Heart right ventricle (tissue), 16 donors: ENCODE measurements at regions of chr5 and their contacts with region 1.

Region 1: DNA sequence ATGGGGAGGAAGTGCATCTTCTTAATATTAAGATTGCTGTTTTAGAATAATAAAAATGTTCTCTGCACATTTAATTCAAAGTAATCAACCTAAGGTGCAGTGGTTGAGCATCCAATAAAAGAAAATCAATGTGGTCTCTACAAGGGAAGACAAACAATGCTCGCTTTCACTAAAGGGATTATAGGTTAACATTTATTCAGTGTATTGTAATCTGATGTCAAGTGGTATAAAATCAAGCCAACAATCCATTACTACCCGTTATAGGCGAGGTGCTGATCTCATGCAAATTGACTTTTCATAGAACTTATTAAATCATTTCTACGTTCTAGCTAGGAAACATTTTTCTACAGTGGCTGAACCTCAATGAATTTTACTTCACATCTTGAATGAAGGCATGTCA is 773.9 kb downstream of the NR2F1-AS1 start:
- DNase-seq: no peak
- ATAC-seq: no peak
- H3K4me3 ChIP-seq: no peak overlapping the region
- H3K27ac ChIP-seq: no peak overlapping the region
- H3K4me1 ChIP-seq: no peaks in the 10 kb centered on the region
- H3K27me3 ChIP-seq: peaks cover 0 to 3% (median 0%) of the 10 kb centered on the region in 7 donors
- CTCF ChIP-seq: no peak

Region 2: DNA sequence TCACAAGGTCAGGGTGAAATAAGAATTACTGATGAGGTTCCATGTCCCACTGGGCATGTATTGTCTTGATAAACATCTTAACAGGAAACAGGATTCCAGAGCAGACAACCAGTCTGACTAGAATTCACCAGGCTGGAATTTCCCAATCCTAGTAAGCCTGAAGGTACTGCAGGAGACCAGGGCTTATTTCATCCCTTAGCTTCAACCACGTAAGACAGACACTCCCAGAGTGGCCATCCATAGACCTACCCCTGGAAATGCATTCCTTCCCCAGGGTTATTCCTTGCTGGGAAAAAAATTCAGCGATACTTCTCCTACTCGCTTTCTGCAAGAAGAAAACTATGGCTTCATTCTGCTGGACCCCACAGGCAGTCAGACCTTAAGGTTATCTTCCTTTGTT is 11.5 kb before region 1 on chr5:
- intact Hi-C with region 1: loop called in 1 of 10 experiments (anchors 1 kb)
- DNase-seq: no peak
- ATAC-seq: no peak
- H3K4me3 ChIP-seq: no peak overlapping the region
- H3K27ac ChIP-seq: no peak overlapping the region
- H3K4me1 ChIP-seq: no peaks in the 10 kb centered on the region
- H3K27me3 ChIP-seq: no peaks in the 10 kb centered on the region
- CTCF ChIP-seq: no peak